CD4-positive, alpha-beta memory T cell (primary cell): ENCODE measurements at regions of chr18 and their contacts with region 1.

Region 1: DNA sequence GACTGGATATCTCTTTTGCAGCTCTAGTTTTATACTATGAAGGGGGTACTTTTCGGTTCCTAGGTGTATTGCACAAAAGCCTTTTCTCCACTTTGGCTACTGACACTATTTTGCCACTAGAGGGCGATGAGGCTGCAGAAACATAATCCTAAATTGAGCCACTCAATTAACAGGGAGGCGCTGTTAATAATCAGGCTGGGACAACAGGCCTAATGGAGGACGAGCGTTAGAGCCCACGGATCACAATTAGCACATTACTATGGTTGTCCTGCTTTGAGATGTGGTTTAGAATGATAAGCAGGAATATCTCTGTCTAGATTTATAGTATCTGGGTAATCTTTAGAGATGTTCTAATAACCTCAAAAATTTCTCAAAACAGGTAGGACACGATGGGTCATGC is 62.2 kb upstream of the PMAIP1 start:
- DNase-seq: peak in 4 of 5 donors; percentile 32 to 45 (median 36)
- H3K4me3 ChIP-seq: no peak overlapping the region
- H3K4me3 Mint-ChIP-seq: no peak overlapping the region
- H3K27ac ChIP-seq: no peak overlapping the region
- H3K27ac Mint-ChIP-seq: peak overlapping the region in 1 of 7 donors; percentile 47
- H3K4me1 ChIP-seq: no peaks in the 10 kb centered on the region
- H3K4me1 Mint-ChIP-seq: peaks cover 0 to 2% (median under 1%) of the 10 kb centered on the region in 4 donors
- H3K27me3 ChIP-seq: no peaks in the 10 kb centered on the region
- H3K27me3 Mint-ChIP-seq: peaks cover 4 to 6% of the 10 kb centered on the region in 2 donors

Region 2: GRCh38 chr18:59672235-59672711 is 165.3 kb before region 1 on chr18:
- CTCF ChIA-PET with region 1: no interaction called
- POLR2A ChIA-PET with region 1: no interaction called
- intact Hi-C with region 1: no loop called
- DNase-seq: no peak
- H3K4me3 ChIP-seq: no peak overlapping the region
- H3K4me3 Mint-ChIP-seq: no peak overlapping the region
- H3K27ac ChIP-seq: no peak overlapping the region
- H3K27ac Mint-ChIP-seq: no peak overlapping the region
- H3K4me1 ChIP-seq: no peaks in the 10 kb centered on the region
- H3K4me1 Mint-ChIP-seq: no peaks in the 10 kb centered on the region
- H3K27me3 ChIP-seq: no peaks in the 10 kb centered on the region
- H3K27me3 Mint-ChIP-seq: no peaks in the 10 kb centered on the region

Region 3: GRCh38 chr18:59988098-59988706 is 150.6 kb after region 1 on chr18:
- CTCF ChIA-PET with region 1: interaction called, 11 read pairs
- POLR2A ChIA-PET with region 1: no interaction called
- intact Hi-C with region 1: loop called (anchors 1 kb)
- DNase-seq: peak in 4 of 5 donors; percentile 26 to 35 (median 31)
- H3K4me3 ChIP-seq: no peak overlapping the region
- H3K4me3 Mint-ChIP-seq: no peak overlapping the region
- H3K27ac ChIP-seq: no peak overlapping the region
- H3K27ac Mint-ChIP-seq: no peak overlapping the region
- H3K4me1 ChIP-seq: no peaks in the 10 kb centered on the region
- H3K4me1 Mint-ChIP-seq: peaks cover 0 to 1% (median 0%) of the 10 kb centered on the region in 4 donors
- H3K27me3 ChIP-seq: peaks cover 8% of the 10 kb centered on the region
- H3K27me3 Mint-ChIP-seq: peaks cover 6 to 19% of the 10 kb centered on the region in 2 donors

Region 4: GRCh38 chr18:60082790-60083189 is 245.2 kb after region 1 on chr18:
- CTCF ChIA-PET with region 1: no interaction called
- POLR2A ChIA-PET with region 1: no interaction called
- intact Hi-C with region 1: no loop called
- DNase-seq: no peak
- H3K4me3 ChIP-seq: no peak overlapping the region
- H3K4me3 Mint-ChIP-seq: no peak overlapping the region
- H3K27ac ChIP-seq: no peak overlapping the region
- H3K27ac Mint-ChIP-seq: no peak overlapping the region
- H3K4me1 ChIP-seq: no peaks in the 10 kb centered on the region
- H3K4me1 Mint-ChIP-seq: no peaks in the 10 kb centered on the region
- H3K27me3 ChIP-seq: no peaks in the 10 kb centered on the region
- H3K27me3 Mint-ChIP-seq: peaks cover 0 to 1% of the 10 kb centered on the region in 2 donors

Region 5: DNA sequence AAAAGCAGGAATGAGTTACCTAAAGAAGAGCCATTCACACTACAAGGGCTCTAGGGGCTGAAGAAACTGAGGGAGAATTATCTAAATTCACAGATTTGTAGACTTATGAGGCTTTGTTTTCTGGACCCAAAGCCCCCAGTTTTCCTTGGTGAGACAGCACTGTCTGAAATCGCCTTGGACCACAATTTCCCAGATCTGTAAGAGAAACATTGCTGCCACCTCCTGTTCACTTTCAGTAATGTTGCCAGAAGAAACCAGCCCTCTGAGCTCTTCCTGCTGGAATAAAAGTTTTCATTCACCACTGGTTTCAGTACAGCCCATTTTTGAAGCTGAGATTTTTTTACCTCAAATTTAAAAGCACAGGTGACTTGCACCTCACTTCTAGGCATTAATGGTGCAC is 1664.9 kb after region 1 on chr18:
- CTCF ChIA-PET with region 1: no interaction called
- POLR2A ChIA-PET with region 1: no interaction called
- intact Hi-C with region 1: loop called (anchors 5 kb)
- DNase-seq: no peak
- H3K4me3 ChIP-seq: no peak overlapping the region
- H3K4me3 Mint-ChIP-seq: no peak overlapping the region
- H3K27ac ChIP-seq: no peak overlapping the region
- H3K27ac Mint-ChIP-seq: no peak overlapping the region
- H3K4me1 ChIP-seq: no peaks in the 10 kb centered on the region
- H3K4me1 Mint-ChIP-seq: no peaks in the 10 kb centered on the region
- H3K27me3 ChIP-seq: no peaks in the 10 kb centered on the region
- H3K27me3 Mint-ChIP-seq: peaks cover 7 to 8% of the 10 kb centered on the region in 2 donors